ENCODE measurements at regions of chr19 and their contacts with region 1.

Region 1: DNA sequence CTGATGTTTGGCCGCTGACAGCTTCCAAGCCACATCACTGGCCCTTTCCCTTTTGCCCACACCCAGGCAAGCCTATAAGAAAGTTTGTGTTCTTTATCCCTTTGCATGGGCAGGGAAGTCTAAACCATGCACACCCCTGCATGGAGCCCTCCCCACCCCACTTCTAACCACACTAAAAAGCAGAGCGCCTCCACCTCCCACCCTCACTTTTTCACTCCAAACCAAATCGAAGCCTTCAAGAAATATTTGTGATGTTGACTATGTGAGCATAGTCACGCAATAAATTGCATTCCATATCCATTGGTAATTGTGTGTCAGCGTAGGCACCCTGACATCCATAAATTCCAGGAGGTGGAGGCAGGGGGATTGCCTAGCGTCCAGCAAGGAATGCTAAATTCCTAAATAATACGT is 104.4 kb upstream of the LSM14A start:
- DNase-seq: peak; percentile 5
- H3K4me3 Mint-ChIP-seq: no peak overlapping the region
- H3K27ac Mint-ChIP-seq: no peak overlapping the region
- H3K4me1 Mint-ChIP-seq: no peaks in the 10 kb centered on the region
- H3K27me3 Mint-ChIP-seq: peaks cover 12% of the 10 kb centered on the region
- CTCF ChIP-seq: no peak

Region 2: DNA sequence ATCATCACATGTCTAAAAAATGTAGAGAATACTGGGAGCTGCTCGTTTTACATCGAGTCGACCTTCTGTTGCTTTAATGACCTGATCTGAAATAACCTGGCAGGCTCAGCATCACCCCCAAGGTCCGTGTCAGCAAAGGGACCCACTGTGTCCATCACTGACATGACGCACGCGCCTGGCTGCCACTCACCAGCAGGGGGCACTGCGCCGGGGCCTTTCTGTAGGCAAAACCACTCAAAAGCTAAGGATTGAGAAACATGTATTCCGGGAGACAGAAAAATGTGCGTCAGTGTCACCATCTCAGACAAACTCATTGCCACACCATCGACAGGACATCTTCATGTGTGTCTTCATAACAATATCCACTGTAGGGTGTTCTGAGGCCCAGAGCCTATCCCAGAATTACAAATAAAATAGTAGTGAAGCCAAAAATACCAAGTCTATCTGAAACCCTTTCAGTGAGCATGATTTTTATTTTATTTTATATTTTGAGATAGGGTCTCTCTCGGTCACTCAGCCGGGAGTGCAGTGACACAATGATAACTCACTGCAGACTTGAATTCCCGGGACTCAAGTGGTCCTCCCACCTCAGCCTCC is 25.8 kb before region 1 on chr19:
- CTCF ChIA-PET with region 1: interaction called, 10 read pairs
- POLR2A ChIA-PET with region 1: no interaction called
- intact Hi-C with region 1: no loop called
- DNase-seq: peak; percentile 68
- H3K4me3 Mint-ChIP-seq: no peak overlapping the region
- H3K27ac Mint-ChIP-seq: no peak overlapping the region
- H3K4me1 Mint-ChIP-seq: no peaks in the 10 kb centered on the region
- H3K27me3 Mint-ChIP-seq: peaks cover 3% of the 10 kb centered on the region
- CTCF ChIP-seq: peak; percentile 64

Measured in MCF 10A (cell line).